Panc1 (cell line): ENCODE measurements at regions of chr19 and their contacts with region 1.

Region 1: GRCh38 chr19:43928820-43929219 is 6.3 kb downstream of the ZNF45 start:
- DNase-seq: no peak
- ATAC-seq: no peak
- H3K4me3 ChIP-seq: no peak overlapping the region
- H3K27ac ChIP-seq: no peak overlapping the region
- H3K4me1 ChIP-seq: no peaks in the 10 kb centered on the region
- H3K27me3 ChIP-seq: no peaks in the 10 kb centered on the region
- CTCF ChIP-seq: no peak

Region 2: GRCh38 chr19:43872547-43873336 is 56.1 kb before region 1 on chr19:
- CTCF ChIA-PET with region 1: no interaction called
- POLR2A ChIA-PET with region 1: no interaction called
- in situ Hi-C with region 1: no loop called
- intact Hi-C with region 1: no loop called
- DNase-seq: no peak
- ATAC-seq: no peak
- H3K4me3 ChIP-seq: no peak overlapping the region
- H3K27ac ChIP-seq: no peak overlapping the region
- H3K4me1 ChIP-seq: no peaks in the 10 kb centered on the region
- H3K27me3 ChIP-seq: no peaks in the 10 kb centered on the region
- CTCF ChIP-seq: no peak

Region 3: DNA sequence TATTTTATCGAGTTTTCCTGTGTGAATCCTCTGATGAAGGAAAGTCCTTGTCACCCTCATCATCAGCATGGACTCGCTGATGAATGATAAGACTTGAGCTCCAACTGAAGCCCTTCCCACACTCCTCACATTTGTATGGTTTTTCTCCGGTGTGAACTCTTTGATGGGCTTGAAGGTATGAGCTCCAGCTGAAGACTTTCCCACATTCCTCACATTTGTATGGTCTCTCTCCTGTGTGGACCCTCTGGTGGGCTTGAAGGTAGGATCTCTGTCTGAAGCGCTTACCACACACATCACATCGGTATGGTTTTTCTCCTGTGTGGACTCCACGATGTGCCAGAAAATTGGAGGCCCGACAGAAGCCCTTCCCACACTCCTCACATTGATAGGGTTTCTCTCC is 15.4 kb before region 1 on chr19:
- CTCF ChIA-PET with region 1: no interaction called
- POLR2A ChIA-PET with region 1: no interaction called
- in situ Hi-C with region 1: no loop called
- intact Hi-C with region 1: loop called (anchors 1 kb)
- DNase-seq: no peak
- ATAC-seq: no peak
- H3K4me3 ChIP-seq: no peak overlapping the region
- H3K27ac ChIP-seq: no peak overlapping the region
- H3K4me1 ChIP-seq: no peaks in the 10 kb centered on the region
- H3K27me3 ChIP-seq: no peaks in the 10 kb centered on the region
- CTCF ChIP-seq: no peak

Region 4: DNA sequence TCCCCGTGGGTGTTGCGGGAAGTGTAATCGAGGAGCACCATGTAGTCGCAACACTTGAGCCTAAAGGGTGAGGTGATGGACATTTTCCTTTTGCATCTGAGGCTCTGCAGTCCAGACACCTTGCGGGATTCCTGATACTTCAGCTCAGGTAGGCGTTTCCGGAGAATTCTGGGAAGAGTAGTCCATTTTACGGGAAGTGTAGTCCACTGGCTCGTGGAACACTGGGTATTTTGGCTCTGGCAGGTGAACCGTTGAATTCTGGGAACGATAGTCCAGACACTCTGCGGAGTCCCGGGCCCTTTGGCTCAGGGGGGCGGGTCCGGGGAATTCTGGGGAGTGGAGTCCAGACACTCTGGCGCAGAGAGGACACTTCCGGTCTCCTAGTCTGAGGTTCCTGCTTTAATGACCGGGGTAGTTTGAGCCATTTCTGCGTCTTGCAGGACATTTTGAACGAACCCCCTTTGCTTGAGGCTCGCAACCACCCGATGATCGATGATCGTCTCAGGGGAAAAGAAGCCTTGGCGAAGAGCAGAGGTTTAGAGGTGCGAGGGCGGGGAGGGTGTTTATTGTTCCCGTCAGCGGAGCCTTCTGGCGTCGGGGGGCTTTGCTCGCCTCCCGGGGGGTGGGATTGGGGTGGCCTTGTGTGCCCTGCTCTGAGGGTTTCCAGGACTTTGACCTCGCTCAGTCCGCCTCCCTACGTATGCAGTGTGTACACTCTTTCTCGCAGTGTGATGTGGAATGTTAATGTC is 123.0 kb after region 1 on chr19 and contains the start of gene ZNF223:
- CTCF ChIA-PET with region 1: no interaction called
- POLR2A ChIA-PET with region 1: no interaction called
- in situ Hi-C with region 1: no loop called
- intact Hi-C with region 1: no loop called
- DNase-seq: peak; percentile 69
- ATAC-seq: peak; percentile 100
- H3K4me3 ChIP-seq: peak within 1 kb of the TSS; percentile 78 to 97
- H3K27ac ChIP-seq: peak within 1 kb of the TSS; percentile 79
- H3K4me1 ChIP-seq: no peaks in the 10 kb centered on the region; the same call in 1 of the 2 replicates
- H3K27me3 ChIP-seq: no peaks in the 10 kb centered on the region
- CTCF ChIP-seq: no peak
- total RNA-seq, gene ZNF223: 2.2 TPM